ENCODE measurements at regions of chr5 and their contacts with region 1.

Region 1: DNA sequence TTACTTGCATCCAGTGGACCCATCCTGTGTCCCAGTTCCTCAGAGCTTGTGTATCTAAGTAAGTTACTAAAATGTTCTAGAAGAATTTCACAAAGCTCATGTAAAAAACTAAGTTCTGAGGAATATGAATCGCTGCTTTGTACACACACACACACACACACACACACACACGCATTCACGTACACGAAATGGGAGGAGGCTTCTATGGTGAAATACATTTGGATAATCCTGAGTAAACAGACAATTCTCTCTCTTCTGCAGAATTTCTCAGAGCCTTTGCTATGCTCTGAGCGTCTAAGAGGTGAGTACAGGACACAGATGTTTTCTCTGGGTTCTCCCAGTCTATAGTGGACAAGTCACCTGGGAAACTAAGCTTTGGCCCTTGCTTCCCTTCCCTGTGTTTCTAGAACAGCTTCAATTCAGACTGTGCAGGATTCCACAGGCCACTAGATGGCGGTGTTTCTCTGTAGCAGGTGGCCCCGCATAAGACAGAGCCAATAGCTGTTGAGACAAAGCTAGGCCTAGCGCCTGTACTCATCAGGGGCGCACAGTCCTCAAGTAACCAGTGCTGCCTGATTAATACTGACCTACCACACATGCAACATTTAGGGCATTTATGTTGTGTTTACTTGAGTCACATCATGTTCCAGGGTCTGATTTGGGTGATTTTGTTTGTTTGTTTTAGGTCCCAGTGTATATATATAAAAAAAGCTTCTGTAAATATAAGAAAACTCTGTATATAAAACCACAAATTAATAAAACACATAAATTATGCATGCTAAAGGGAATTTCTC is 114.8 kb downstream of the LIFR start:
- DNase-seq: peak; percentile 65 to 74 (median 72)
- H3K4me3 ChIP-seq: no peak overlapping the region
- H3K4me3 Mint-ChIP-seq: no peak overlapping the region
- H3K27ac ChIP-seq: no peak overlapping the region
- H3K27ac Mint-ChIP-seq: peak overlapping the region in 1 of 7 donors; percentile 68
- H3K4me1 ChIP-seq: no peaks in the 10 kb centered on the region
- H3K4me1 Mint-ChIP-seq: peaks cover 0 to 2% (median 0%) of the 10 kb centered on the region in 4 donors
- H3K27me3 ChIP-seq: peaks cover 3% of the 10 kb centered on the region
- H3K27me3 Mint-ChIP-seq: peaks cover 16 to 27% of the 10 kb centered on the region in 2 donors

Region 2: GRCh38 chr5:38453506-38453905 is 11.9 kb after region 1 on chr5:
- CTCF ChIA-PET with region 1: interaction called, 74 read pairs
- POLR2A ChIA-PET with region 1: interaction called, 6 read pairs
- intact Hi-C with region 1: no loop called
- DNase-seq: peak; percentile 72 to 81 (median 79)
- H3K4me3 ChIP-seq: no peak overlapping the region
- H3K4me3 Mint-ChIP-seq: peak overlapping the region in 7 of 8 donors; percentile 26 to 75 (median 68)
- H3K27ac ChIP-seq: no peak overlapping the region
- H3K27ac Mint-ChIP-seq: peak overlapping the region in 6 of 7 donors; percentile 19 to 88 (median 52)
- H3K4me1 ChIP-seq: peaks cover 32% of the 10 kb centered on the region
- H3K4me1 Mint-ChIP-seq: peaks cover 28 to 50% (median 31%) of the 10 kb centered on the region in 4 donors
- H3K27me3 ChIP-seq: peaks cover 17% of the 10 kb centered on the region
- H3K27me3 Mint-ChIP-seq: peaks cover 47 to 64% of the 10 kb centered on the region in 2 donors

Region 3: GRCh38 chr5:38479315-38479904 is 37.8 kb after region 1 on chr5:
- CTCF ChIA-PET with region 1: interaction called, 16 read pairs
- POLR2A ChIA-PET with region 1: no interaction called
- intact Hi-C with region 1: no loop called
- DNase-seq: no peak
- H3K4me3 ChIP-seq: no peak overlapping the region
- H3K4me3 Mint-ChIP-seq: no peak overlapping the region
- H3K27ac ChIP-seq: no peak overlapping the region
- H3K27ac Mint-ChIP-seq: no peak overlapping the region
- H3K4me1 ChIP-seq: no peaks in the 10 kb centered on the region
- H3K4me1 Mint-ChIP-seq: no peaks in the 10 kb centered on the region
- H3K27me3 ChIP-seq: no peaks in the 10 kb centered on the region
- H3K27me3 Mint-ChIP-seq: peaks cover 10 to 23% of the 10 kb centered on the region in 2 donors

Region 4: GRCh38 chr5:38569180-38569579 is 127.5 kb after region 1 on chr5:
- CTCF ChIA-PET with region 1: no interaction called
- POLR2A ChIA-PET with region 1: no interaction called
- intact Hi-C with region 1: no loop called
- DNase-seq: no peak
- H3K4me3 ChIP-seq: no peak overlapping the region
- H3K4me3 Mint-ChIP-seq: no peak overlapping the region
- H3K27ac ChIP-seq: no peak overlapping the region
- H3K27ac Mint-ChIP-seq: no peak overlapping the region
- H3K4me1 ChIP-seq: no peaks in the 10 kb centered on the region
- H3K4me1 Mint-ChIP-seq: no peaks in the 10 kb centered on the region
- H3K27me3 ChIP-seq: no peaks in the 10 kb centered on the region
- H3K27me3 Mint-ChIP-seq: peaks cover 16% of the 10 kb centered on the region in 2 donors

Region 5: GRCh38 chr5:38666668-38667498 is 225.2 kb after region 1 on chr5:
- CTCF ChIA-PET with region 1: interaction called, 8 read pairs
- POLR2A ChIA-PET with region 1: no interaction called
- intact Hi-C with region 1: loop called (anchors 10 kb)
- DNase-seq: no peak
- H3K4me3 ChIP-seq: no peak overlapping the region
- H3K4me3 Mint-ChIP-seq: no peak overlapping the region
- H3K27ac ChIP-seq: no peak overlapping the region
- H3K27ac Mint-ChIP-seq: no peak overlapping the region
- H3K4me1 ChIP-seq: no peaks in the 10 kb centered on the region
- H3K4me1 Mint-ChIP-seq: no peaks in the 10 kb centered on the region
- H3K27me3 ChIP-seq: no peaks in the 10 kb centered on the region
- H3K27me3 Mint-ChIP-seq: peaks cover 14% of the 10 kb centered on the region in 2 donors

Region 6: GRCh38 chr5:38922199-38922598 is 480.5 kb after region 1 on chr5:
- CTCF ChIA-PET with region 1: interaction called, 65 read pairs
- POLR2A ChIA-PET with region 1: no interaction called
- intact Hi-C with region 1: no loop called
- DNase-seq: peak in 4 of 5 donors; percentile 19 to 35 (median 25)
- H3K4me3 ChIP-seq: no peak overlapping the region
- H3K4me3 Mint-ChIP-seq: no peak overlapping the region
- H3K27ac ChIP-seq: no peak overlapping the region
- H3K27ac Mint-ChIP-seq: no peak overlapping the region
- H3K4me1 ChIP-seq: no peaks in the 10 kb centered on the region
- H3K4me1 Mint-ChIP-seq: no peaks in the 10 kb centered on the region
- H3K27me3 ChIP-seq: no peaks in the 10 kb centered on the region
- H3K27me3 Mint-ChIP-seq: peaks cover 10 to 22% of the 10 kb centered on the region in 2 donors

Region 7: GRCh38 chr5:39547553-39548154 is 1106.0 kb after region 1 on chr5:
- CTCF ChIA-PET with region 1: interaction called, 23 read pairs
- POLR2A ChIA-PET with region 1: no interaction called
- intact Hi-C with region 1: no loop called
- DNase-seq: peak in 4 of 5 donors; percentile 32 to 39 (median 34)
- H3K4me3 ChIP-seq: no peak overlapping the region
- H3K4me3 Mint-ChIP-seq: peak overlapping the region in 7 of 8 donors; percentile 4 to 64 (median 29)
- H3K27ac ChIP-seq: no peak overlapping the region
- H3K27ac Mint-ChIP-seq: no peak overlapping the region
- H3K4me1 ChIP-seq: peaks cover 7% of the 10 kb centered on the region
- H3K4me1 Mint-ChIP-seq: peaks cover 3 to 5% (median 5%) of the 10 kb centered on the region in 4 donors
- H3K27me3 ChIP-seq: no peaks in the 10 kb centered on the region
- H3K27me3 Mint-ChIP-seq: peaks cover 0 to 1% of the 10 kb centered on the region in 2 donors

Measured in CD4-positive, alpha-beta memory T cell (primary cell).